Naive thymus-derived CD4-positive, alpha-beta T cell (primary cell): ENCODE measurements at regions of chr12 and their contacts with region 1.

Region 1: GRCh38 chr12:107760809-107761501 is at the start of gene PRDM4:
- DNase-seq: peak; percentile 85 to 96 (median 93)
- ATAC-seq: peak; percentile 99
- H3K4me3 ChIP-seq: peak within 1 kb of the TSS; percentile 83
- H3K4me3 Mint-ChIP-seq: peak within 1 kb of the TSS; percentile 85 to 94 (median 91)
- H3K27ac ChIP-seq: peak within 1 kb of the TSS; percentile 78
- H3K27ac Mint-ChIP-seq: peak within 1 kb of the TSS; percentile 85 to 96 (median 91)
- H3K4me1 ChIP-seq: peaks cover 21% of the 10 kb centered on the region in 2 donors
- H3K4me1 Mint-ChIP-seq: peaks cover 19 to 52% (median 35%) of the 10 kb centered on the region in 7 donors
- H3K27me3 ChIP-seq: no peaks in the 10 kb centered on the region
- H3K27me3 Mint-ChIP-seq: peaks cover 0 to 5% (median 0%) of the 10 kb centered on the region in 5 donors
- total RNA-seq, gene PRDM4: 32.4 to 41.3 (median 36.4) TPM

Region 2: GRCh38 chr12:106357549-106358395 is 1403.2 kb before region 1 on chr12 and contains the start of gene POLR3B:
- CTCF ChIA-PET with region 1: no interaction called
- POLR2A ChIA-PET with region 1: no interaction called
- intact Hi-C with region 1: loop called in 1 of 2 experiments (anchors 2 kb)
- DNase-seq: peak; percentile 95 to 99 (median 98)
- ATAC-seq: peak; percentile 98
- H3K4me3 ChIP-seq: peak within 1 kb of the TSS; percentile 96
- H3K4me3 Mint-ChIP-seq: peak within 1 kb of the TSS; percentile 81 to 97 (median 92)
- H3K27ac ChIP-seq: peak within 1 kb of the TSS; percentile 74
- H3K27ac Mint-ChIP-seq: peak within 1 kb of the TSS; percentile 85 to 95 (median 91)
- H3K4me1 ChIP-seq: peaks cover 6 to 12% of the 10 kb centered on the region in 2 donors
- H3K4me1 Mint-ChIP-seq: peaks cover 11 to 22% (median 17%) of the 10 kb centered on the region in 7 donors
- H3K27me3 ChIP-seq: no peaks in the 10 kb centered on the region
- H3K27me3 Mint-ChIP-seq: no peaks in the 10 kb centered on the region
- total RNA-seq, gene POLR3B: 4.7 to 8.7 (median 6.8) TPM

Region 3: GRCh38 chr12:107607464-107608392 is 153.2 kb before region 1 on chr12:
- CTCF ChIA-PET with region 1: no interaction called
- POLR2A ChIA-PET with region 1: no interaction called
- intact Hi-C with region 1: no loop called
- DNase-seq: peak; percentile 55 to 82 (median 71)
- ATAC-seq: peak; percentile 78
- H3K4me3 ChIP-seq: no peak overlapping the region
- H3K4me3 Mint-ChIP-seq: no peak overlapping the region
- H3K27ac ChIP-seq: no peak overlapping the region
- H3K27ac Mint-ChIP-seq: peak overlapping the region in 2 of 9 donors; percentile 9 to 25
- H3K4me1 ChIP-seq: no peaks in the 10 kb centered on the region
- H3K4me1 Mint-ChIP-seq: no peaks in the 10 kb centered on the region
- H3K27me3 ChIP-seq: no peaks in the 10 kb centered on the region
- H3K27me3 Mint-ChIP-seq: no peaks in the 10 kb centered on the region

Region 4: GRCh38 chr12:107685360-107686248 is 75.4 kb before region 1 on chr12 and contains the start of gene PWP1:
- CTCF ChIA-PET with region 1: no interaction called
- POLR2A ChIA-PET with region 1: interaction called, 7 read pairs
- intact Hi-C with region 1: loop called (anchors 1 kb)
- DNase-seq: peak; percentile 93 to 97 (median 95)
- ATAC-seq: peak; percentile 93
- H3K4me3 ChIP-seq: peak within 1 kb of the TSS; percentile 78
- H3K4me3 Mint-ChIP-seq: peak within 1 kb of the TSS; percentile 90 to 99 (median 95)
- H3K27ac ChIP-seq: peak within 1 kb of the TSS; percentile 88
- H3K27ac Mint-ChIP-seq: peak within 1 kb of the TSS; percentile 90 to 99 (median 97)
- H3K4me1 ChIP-seq: peaks cover 12 to 19% of the 10 kb centered on the region in 2 donors
- H3K4me1 Mint-ChIP-seq: peaks cover 23 to 40% (median 35%) of the 10 kb centered on the region in 7 donors
- H3K27me3 ChIP-seq: no peaks in the 10 kb centered on the region
- H3K27me3 Mint-ChIP-seq: peaks cover 0 to 3% (median 0%) of the 10 kb centered on the region in 5 donors
- total RNA-seq, gene PWP1: 20.9 to 42.5 (median 25.7) TPM

Region 5: GRCh38 chr12:107829271-107829670 is 68.3 kb after region 1 on chr12:
- CTCF ChIA-PET with region 1: no interaction called
- POLR2A ChIA-PET with region 1: no interaction called
- intact Hi-C with region 1: no loop called
- DNase-seq: no peak
- ATAC-seq: no peak
- H3K4me3 ChIP-seq: no peak overlapping the region
- H3K4me3 Mint-ChIP-seq: no peak overlapping the region
- H3K27ac ChIP-seq: no peak overlapping the region
- H3K27ac Mint-ChIP-seq: no peak overlapping the region
- H3K4me1 ChIP-seq: no peaks in the 10 kb centered on the region
- H3K4me1 Mint-ChIP-seq: no peaks in the 10 kb centered on the region
- H3K27me3 ChIP-seq: peaks cover 0 to 3% of the 10 kb centered on the region in 2 donors
- H3K27me3 Mint-ChIP-seq: peaks cover 7 to 48% (median 25%) of the 10 kb centered on the region in 5 donors

Region 6: DNA sequence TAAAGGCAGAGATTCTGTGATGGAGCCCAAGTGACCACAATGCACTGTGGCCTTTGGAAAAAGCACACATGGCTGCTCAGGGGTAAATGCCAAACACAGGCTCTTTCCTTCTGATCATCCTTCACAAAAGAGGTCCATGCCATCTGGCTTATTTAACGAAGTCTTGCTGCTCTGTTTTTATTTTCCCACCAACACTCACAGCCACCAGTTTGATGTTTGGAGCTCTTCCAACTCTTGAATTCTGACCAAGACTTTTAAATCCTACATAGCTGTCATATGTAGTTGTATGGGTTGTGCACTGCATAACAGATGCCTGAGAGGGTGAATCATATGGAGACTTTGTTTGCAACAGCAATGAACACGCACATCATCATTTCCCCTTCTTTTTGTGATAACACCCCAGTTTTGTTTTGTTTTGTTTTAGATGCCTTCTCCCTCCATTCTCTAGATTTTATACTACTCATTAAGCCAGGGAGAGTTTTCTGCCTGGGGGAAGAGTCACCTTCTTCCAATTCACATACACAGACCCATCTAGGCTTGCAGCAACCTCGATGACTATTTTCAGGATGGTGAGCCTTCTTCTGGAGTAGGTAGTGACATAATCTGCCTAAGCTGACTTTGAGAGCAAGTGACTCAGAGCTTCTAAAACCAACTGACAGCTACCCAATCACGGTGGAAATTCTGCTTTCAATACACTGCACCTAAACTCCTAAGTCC is 223.0 kb after region 1 on chr12:
- CTCF ChIA-PET with region 1: no interaction called
- POLR2A ChIA-PET with region 1: no interaction called
- intact Hi-C with region 1: no loop called
- DNase-seq: no peak
- ATAC-seq: no peak
- H3K4me3 ChIP-seq: no peak overlapping the region
- H3K4me3 Mint-ChIP-seq: no peak overlapping the region
- H3K27ac ChIP-seq: no peak overlapping the region
- H3K27ac Mint-ChIP-seq: no peak overlapping the region
- H3K4me1 ChIP-seq: no peaks in the 10 kb centered on the region
- H3K4me1 Mint-ChIP-seq: no peaks in the 10 kb centered on the region
- H3K27me3 ChIP-seq: no peaks in the 10 kb centered on the region
- H3K27me3 Mint-ChIP-seq: peaks cover 2 to 38% (median 25%) of the 10 kb centered on the region in 5 donors

Region 7: DNA sequence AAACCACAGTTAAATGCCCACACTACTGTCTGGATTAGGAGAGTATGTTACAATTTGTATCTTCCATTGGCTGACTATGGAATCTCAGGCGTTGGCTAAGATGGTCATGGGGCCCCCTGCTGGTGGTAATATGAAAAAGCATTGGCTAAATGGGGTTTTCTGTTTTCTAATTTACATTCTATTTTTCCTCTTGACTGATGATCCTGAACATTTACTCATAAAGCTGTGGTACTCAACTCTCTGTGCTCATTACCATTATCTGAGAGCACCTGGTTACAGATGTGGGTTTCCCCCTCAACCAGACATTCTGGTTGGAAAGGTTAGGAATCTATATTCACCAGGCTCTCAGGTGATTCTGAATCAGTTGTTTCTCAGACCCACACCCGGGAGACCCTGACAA is 433.0 kb after region 1 on chr12:
- CTCF ChIA-PET with region 1: no interaction called
- POLR2A ChIA-PET with region 1: no interaction called
- intact Hi-C with region 1: loop called in 1 of 2 experiments (anchors 2 kb)
- DNase-seq: peak in 2 of 9 donors; percentile 3 to 7
- ATAC-seq: no peak
- H3K4me3 ChIP-seq: no peak overlapping the region
- H3K4me3 Mint-ChIP-seq: no peak overlapping the region
- H3K27ac ChIP-seq: no peak overlapping the region
- H3K27ac Mint-ChIP-seq: no peak overlapping the region
- H3K4me1 ChIP-seq: no peaks in the 10 kb centered on the region
- H3K4me1 Mint-ChIP-seq: peaks cover 0 to 2% (median 0%) of the 10 kb centered on the region in 7 donors
- H3K27me3 ChIP-seq: no peaks in the 10 kb centered on the region
- H3K27me3 Mint-ChIP-seq: peaks cover 0 to 58% (median 35%) of the 10 kb centered on the region in 5 donors

Region 8: GRCh38 chr12:108856428-108857157 is 1095.6 kb after region 1 on chr12:
- CTCF ChIA-PET with region 1: no interaction called
- POLR2A ChIA-PET with region 1: no interaction called
- intact Hi-C with region 1: loop called in 1 of 2 experiments (anchors 10 kb)
- DNase-seq: peak; percentile 35 to 77 (median 54)
- ATAC-seq: peak; percentile 68
- H3K4me3 ChIP-seq: peak overlapping the region; percentile 84
- H3K4me3 Mint-ChIP-seq: peak overlapping the region; percentile 89 to 97 (median 94)
- H3K27ac ChIP-seq: peak overlapping the region; percentile 62
- H3K27ac Mint-ChIP-seq: peak overlapping the region; percentile 76 to 99 (median 92)
- H3K4me1 ChIP-seq: peaks cover 18 to 23% of the 10 kb centered on the region in 2 donors
- H3K4me1 Mint-ChIP-seq: peaks cover 26 to 56% (median 47%) of the 10 kb centered on the region in 7 donors
- H3K27me3 ChIP-seq: no peaks in the 10 kb centered on the region
- H3K27me3 Mint-ChIP-seq: peaks cover 0 to 2% (median 0%) of the 10 kb centered on the region in 5 donors

Region 9: DNA sequence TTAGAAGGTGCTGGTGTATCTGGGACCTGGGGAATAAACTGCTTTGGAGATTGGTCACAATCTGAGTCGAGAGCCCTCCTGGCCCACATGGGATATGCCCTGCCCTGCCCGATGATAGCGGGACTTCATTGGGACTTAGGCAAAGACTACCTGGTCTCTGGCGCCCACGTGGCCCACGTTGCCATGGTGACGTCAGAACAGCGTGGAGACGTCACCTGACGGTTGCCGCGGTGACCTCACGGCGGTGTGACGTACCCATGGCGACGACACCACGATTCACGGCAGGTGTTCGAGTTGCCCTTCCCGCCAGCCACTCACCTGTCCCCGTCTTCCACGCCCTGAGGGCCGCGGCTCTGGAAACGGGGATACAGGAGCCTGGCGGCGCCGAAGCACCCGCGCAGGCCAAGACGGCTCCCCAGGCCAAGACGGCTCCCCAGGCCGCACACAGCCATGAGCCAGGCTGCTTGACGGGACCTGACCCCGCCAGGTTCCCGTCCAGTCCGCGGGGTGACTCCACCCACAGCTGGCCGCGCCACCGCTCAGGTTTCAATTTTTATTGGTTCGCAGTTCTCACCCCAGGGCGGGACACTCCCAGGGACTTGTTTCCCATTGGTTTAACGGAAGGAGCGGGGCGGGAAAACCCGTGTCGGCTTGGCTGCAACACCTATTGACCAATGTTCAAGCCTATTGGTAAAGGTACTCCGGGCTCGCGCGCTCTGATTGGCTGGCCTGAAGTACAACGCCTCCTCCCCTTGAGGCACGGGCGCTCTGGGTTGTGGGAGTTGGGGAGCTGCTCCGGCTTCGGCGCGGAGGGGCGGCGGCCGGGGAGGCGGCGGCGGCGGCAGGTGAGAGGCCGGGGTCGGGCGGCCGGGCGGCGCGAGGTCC is 1812.3 kb after region 1 on chr12 and contains the starts of genes MMAB and MVK:
- CTCF ChIA-PET with region 1: no interaction called
- POLR2A ChIA-PET with region 1: no interaction called
- intact Hi-C with region 1: loop called in 1 of 2 experiments (anchors 2 kb)
- DNase-seq: peak; percentile 87 to 99 (median 99)
- ATAC-seq: peak; percentile 97
- H3K4me3 ChIP-seq: peak within 1 kb of the TSS; percentile 75
- H3K4me3 Mint-ChIP-seq: peak within 1 kb of the TSS; percentile 90 to 97 (median 94)
- H3K27ac ChIP-seq: peak within 1 kb of the TSS; percentile 95
- H3K27ac Mint-ChIP-seq: peak within 1 kb of the TSS; percentile 87 to 100 (median 95)
- H3K4me1 ChIP-seq: peaks cover 13 to 16% of the 10 kb centered on the region in 2 donors
- H3K4me1 Mint-ChIP-seq: peaks cover 9 to 39% (median 36%) of the 10 kb centered on the region in 7 donors
- H3K27me3 ChIP-seq: no peaks in the 10 kb centered on the region
- H3K27me3 Mint-ChIP-seq: no peaks in the 10 kb centered on the region
- total RNA-seq, gene MMAB: 13.5 to 24.7 (median 20.1) TPM
- total RNA-seq, gene MVK: 10.0 to 14.8 (median 11.7) TPM